B cell (primary cell): ENCODE measurements at regions of chr11 and their contacts with region 1.

Region 1: GRCh38 chr11:119095066-119095880 is 6.4 kb downstream of the DPAGT1 start:
- DNase-seq: peak; percentile 100
- ATAC-seq: peak; percentile 85
- H3K4me3 ChIP-seq: peak overlapping the region; percentile 42 to 91 (median 85)
- H3K4me3 Mint-ChIP-seq: peak overlapping the region; percentile 96
- H3K27ac ChIP-seq: peak overlapping the region; percentile 69 to 76
- H3K27ac Mint-ChIP-seq: peak overlapping the region; percentile 84
- H3K4me1 ChIP-seq: peaks cover 26 to 43% of the 10 kb centered on the region in 2 donors
- H3K4me1 Mint-ChIP-seq: peaks cover 47% of the 10 kb centered on the region
- H3K27me3 ChIP-seq: no peaks in the 10 kb centered on the region
- H3K27me3 Mint-ChIP-seq: no peaks in the 10 kb centered on the region
- CTCF ChIP-seq: peak; percentile 9

Region 2: DNA sequence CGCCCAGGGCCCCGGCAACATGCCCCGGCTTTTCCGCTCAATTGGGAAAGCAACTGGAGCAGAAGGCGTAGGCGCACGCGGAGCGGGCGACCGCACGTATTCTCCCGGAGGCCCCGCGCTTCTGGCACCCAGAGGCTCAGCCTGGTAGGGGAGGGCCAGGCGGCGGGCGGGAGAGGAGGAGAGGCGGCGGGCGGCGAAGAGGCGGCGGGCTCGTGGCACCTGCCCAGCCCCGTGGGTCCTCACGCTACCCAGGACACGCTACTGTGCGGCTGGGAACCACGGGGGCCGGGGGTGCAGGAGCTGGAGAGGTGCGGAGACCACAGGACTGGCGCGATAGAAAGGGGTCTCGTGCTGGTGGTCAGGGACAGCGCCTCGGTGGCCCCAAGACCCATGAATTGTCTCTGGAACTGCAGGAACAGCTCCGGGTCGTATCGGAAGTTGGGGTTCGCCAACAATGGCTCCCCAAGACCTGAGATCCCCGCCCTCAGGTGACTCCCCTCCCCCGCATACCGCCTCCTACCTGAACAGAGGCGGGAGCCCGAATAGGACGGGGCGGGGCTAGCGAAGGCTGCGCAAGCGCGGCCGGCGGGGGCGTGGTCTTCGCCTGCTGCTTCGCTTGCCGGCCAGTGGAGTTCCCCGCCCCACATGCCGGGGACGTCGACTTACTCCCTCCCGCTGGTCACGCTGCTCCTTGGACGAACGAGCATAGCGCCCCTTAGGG is 64.8 kb before region 1 on chr11 and contains the start of gene SLC37A4:
- CTCF ChIA-PET with region 1: no interaction called
- POLR2A ChIA-PET with region 1: no interaction called
- intact Hi-C with region 1: loop called (anchors 1 kb)
- DNase-seq: peak; percentile 99
- ATAC-seq: peak; percentile 96
- H3K4me3 ChIP-seq: peak within 1 kb of the TSS in 4 of 5 experiments; percentile 80 to 89 (median 86)
- H3K4me3 Mint-ChIP-seq: peak within 1 kb of the TSS; percentile 92
- H3K27ac ChIP-seq: peak within 1 kb of the TSS; percentile 46 to 74
- H3K27ac Mint-ChIP-seq: peak within 1 kb of the TSS; percentile 82
- H3K4me1 ChIP-seq: peaks cover 4 to 10% of the 10 kb centered on the region in 2 donors
- H3K4me1 Mint-ChIP-seq: peaks cover 20% of the 10 kb centered on the region
- H3K27me3 ChIP-seq: no peaks in the 10 kb centered on the region
- H3K27me3 Mint-ChIP-seq: no peaks in the 10 kb centered on the region
- CTCF ChIP-seq: no peak
- total RNA-seq, gene SLC37A4: 13.2 and 14.3 TPM in 2 replicates

Region 3: GRCh38 chr11:119067371-119068222 is 27.7 kb before region 1 on chr11 and contains the start of gene VPS11:
- CTCF ChIA-PET with region 1: interaction called, 6 read pairs
- POLR2A ChIA-PET with region 1: interaction called, 17 read pairs
- intact Hi-C with region 1: loop called (anchors 1 kb)
- DNase-seq: peak; percentile 97
- ATAC-seq: peak; percentile 96
- H3K4me3 ChIP-seq: peak within 1 kb of the TSS; percentile 72 to 98 (median 96)
- H3K4me3 Mint-ChIP-seq: peak within 1 kb of the TSS; percentile 100
- H3K27ac ChIP-seq: peak within 1 kb of the TSS; percentile 88 to 92
- H3K27ac Mint-ChIP-seq: peak within 1 kb of the TSS; percentile 98
- H3K4me1 ChIP-seq: peaks cover 15 to 28% of the 10 kb centered on the region in 2 donors
- H3K4me1 Mint-ChIP-seq: peaks cover 38% of the 10 kb centered on the region
- H3K27me3 ChIP-seq: no peaks in the 10 kb centered on the region
- H3K27me3 Mint-ChIP-seq: no peaks in the 10 kb centered on the region
- CTCF ChIP-seq: no peak
- total RNA-seq, gene VPS11: 64.7 and 71.1 TPM in 2 replicates

Region 4: GRCh38 chr11:119084663-119085436 is 10.4 kb before region 1 on chr11 and contains the start of gene HMBS:
- CTCF ChIA-PET with region 1: interaction called, 13 read pairs
- POLR2A ChIA-PET with region 1: interaction called, 7 read pairs
- intact Hi-C with region 1: loop called (anchors 1 kb)
- DNase-seq: peak; percentile 97
- ATAC-seq: peak; percentile 91
- H3K4me3 ChIP-seq: peak within 1 kb of the TSS; percentile 74 to 90 (median 81)
- H3K4me3 Mint-ChIP-seq: peak within 1 kb of the TSS; percentile 98
- H3K27ac ChIP-seq: peak within 1 kb of the TSS; percentile 45 to 79
- H3K27ac Mint-ChIP-seq: peak within 1 kb of the TSS; percentile 95
- H3K4me1 ChIP-seq: peaks cover 12 to 21% of the 10 kb centered on the region in 2 donors
- H3K4me1 Mint-ChIP-seq: peaks cover 20% of the 10 kb centered on the region
- H3K27me3 ChIP-seq: no peaks in the 10 kb centered on the region
- H3K27me3 Mint-ChIP-seq: no peaks in the 10 kb centered on the region
- CTCF ChIP-seq: no peak
- total RNA-seq, gene HMBS: 7.6 and 9.2 TPM in 2 replicates